CD4-positive, alpha-beta memory T cell (primary cell): ENCODE measurements at regions of chr2 and their contacts with region 1.

Region 1: GRCh38 chr2:151289369-151290088 is at the start of gene NMI:
- DNase-seq: peak; percentile 75 to 84 (median 81)
- H3K4me3 ChIP-seq: peak within 1 kb of the TSS; percentile 70 to 82
- H3K4me3 Mint-ChIP-seq: peak within 1 kb of the TSS; percentile 90 to 98 (median 94)
- H3K27ac ChIP-seq: peak within 1 kb of the TSS; percentile 95
- H3K27ac Mint-ChIP-seq: peak within 1 kb of the TSS; percentile 96 to 99 (median 98)
- H3K4me1 ChIP-seq: peaks cover 45% of the 10 kb centered on the region
- H3K4me1 Mint-ChIP-seq: peaks cover 31 to 62% (median 49%) of the 10 kb centered on the region in 4 donors
- H3K27me3 ChIP-seq: no peaks in the 10 kb centered on the region
- H3K27me3 Mint-ChIP-seq: no peaks in the 10 kb centered on the region
- total RNA-seq, gene NMI: 38.6 to 40.0 TPM

Region 2: GRCh38 chr2:149587220-149587949 is 1702.1 kb before region 1 on chr2 and contains the start of gene MMADHC:
- CTCF ChIA-PET with region 1: no interaction called
- POLR2A ChIA-PET with region 1: interaction called, 8 read pairs
- intact Hi-C with region 1: loop called (anchors 1 kb)
- DNase-seq: peak; percentile 90 to 93 (median 93)
- H3K4me3 ChIP-seq: peak within 1 kb of the TSS; percentile 90 to 91
- H3K4me3 Mint-ChIP-seq: peak within 1 kb of the TSS; percentile 93 to 100 (median 98)
- H3K27ac ChIP-seq: peak within 1 kb of the TSS; percentile 98
- H3K27ac Mint-ChIP-seq: peak within 1 kb of the TSS; percentile 96 to 100 (median 99)
- H3K4me1 ChIP-seq: peaks cover 40% of the 10 kb centered on the region
- H3K4me1 Mint-ChIP-seq: peaks cover 22 to 55% (median 42%) of the 10 kb centered on the region in 4 donors
- H3K27me3 ChIP-seq: no peaks in the 10 kb centered on the region
- H3K27me3 Mint-ChIP-seq: peaks cover 3 to 17% of the 10 kb centered on the region in 2 donors
- total RNA-seq, gene MMADHC: 66.4 to 69.4 TPM

Region 3: DNA sequence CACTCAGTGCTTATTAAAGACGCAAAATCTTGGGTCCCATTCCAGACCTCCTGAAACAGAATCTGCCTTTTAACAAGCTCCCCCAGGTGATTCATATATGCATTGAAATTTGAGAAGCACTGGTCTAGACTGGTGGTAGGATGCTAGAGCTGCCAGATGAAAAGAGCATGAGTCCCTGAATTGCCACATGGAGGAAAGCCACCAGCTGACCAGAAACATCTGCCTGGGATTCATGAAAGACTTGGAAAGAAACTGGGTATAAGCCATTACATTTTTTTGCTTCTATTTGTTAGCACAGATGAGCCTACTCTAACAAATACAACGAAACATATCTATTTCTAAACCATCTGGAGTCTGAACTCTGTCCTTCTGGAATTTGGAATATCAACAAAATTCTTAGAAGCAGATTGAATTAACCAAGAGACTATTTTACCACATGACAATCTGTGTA is 256.8 kb before region 1 on chr2:
- CTCF ChIA-PET with region 1: no interaction called
- POLR2A ChIA-PET with region 1: no interaction called
- intact Hi-C with region 1: no loop called
- DNase-seq: no peak
- H3K4me3 ChIP-seq: no peak overlapping the region
- H3K4me3 Mint-ChIP-seq: no peak overlapping the region
- H3K27ac ChIP-seq: no peak overlapping the region
- H3K27ac Mint-ChIP-seq: no peak overlapping the region
- H3K4me1 ChIP-seq: no peaks in the 10 kb centered on the region
- H3K4me1 Mint-ChIP-seq: peaks cover 0 to 12% (median 6%) of the 10 kb centered on the region in 4 donors
- H3K27me3 ChIP-seq: no peaks in the 10 kb centered on the region
- H3K27me3 Mint-ChIP-seq: peaks cover 8 to 18% of the 10 kb centered on the region in 2 donors

Region 4: GRCh38 chr2:151363709-151364108 is 74.2 kb after region 1 on chr2:
- CTCF ChIA-PET with region 1: no interaction called
- POLR2A ChIA-PET with region 1: no interaction called
- intact Hi-C with region 1: no loop called
- DNase-seq: peak in 1 of 5 donors; percentile 4
- H3K4me3 ChIP-seq: no peak overlapping the region
- H3K4me3 Mint-ChIP-seq: no peak overlapping the region
- H3K27ac ChIP-seq: no peak overlapping the region
- H3K27ac Mint-ChIP-seq: no peak overlapping the region
- H3K4me1 ChIP-seq: no peaks in the 10 kb centered on the region
- H3K4me1 Mint-ChIP-seq: no peaks in the 10 kb centered on the region
- H3K27me3 ChIP-seq: no peaks in the 10 kb centered on the region
- H3K27me3 Mint-ChIP-seq: peaks cover 1 to 8% of the 10 kb centered on the region in 2 donors

Region 5: DNA sequence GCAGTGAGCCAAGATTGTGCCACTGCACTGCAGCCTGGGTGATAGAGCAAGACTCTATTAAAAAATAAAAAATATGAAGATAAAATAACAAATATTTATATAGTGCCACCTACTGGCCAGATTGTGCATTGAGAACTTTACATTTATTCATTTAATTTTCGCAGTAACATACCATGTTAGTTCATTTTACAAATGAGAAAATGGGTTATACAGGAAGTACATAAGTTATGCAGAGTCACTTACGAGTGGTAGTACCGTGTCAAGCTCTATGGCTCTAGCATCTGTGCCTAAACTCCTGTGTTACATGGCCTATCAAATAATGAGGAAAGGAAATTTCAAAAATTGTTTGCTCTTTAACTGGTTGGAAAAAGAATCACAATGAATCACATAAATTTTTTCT is 148.1 kb after region 1 on chr2:
- CTCF ChIA-PET with region 1: interaction called, 3 read pairs
- POLR2A ChIA-PET with region 1: interaction called, 9 read pairs
- intact Hi-C with region 1: loop called (anchors 1 kb)
- DNase-seq: peak in 4 of 5 donors; percentile 23 to 41 (median 32)
- H3K4me3 ChIP-seq: no peak overlapping the region
- H3K4me3 Mint-ChIP-seq: no peak overlapping the region
- H3K27ac ChIP-seq: no peak overlapping the region
- H3K27ac Mint-ChIP-seq: peak overlapping the region in 5 of 7 donors; percentile 36 to 81 (median 61)
- H3K4me1 ChIP-seq: no peaks in the 10 kb centered on the region
- H3K4me1 Mint-ChIP-seq: peaks cover 3 to 9% (median 6%) of the 10 kb centered on the region in 4 donors
- H3K27me3 ChIP-seq: no peaks in the 10 kb centered on the region
- H3K27me3 Mint-ChIP-seq: no peaks in the 10 kb centered on the region